Endothelial cell of umbilical vein (primary cell): ENCODE measurements at regions of chr2 and their contacts with region 1.

Region 1: GRCh38 chr2:189221853-189222772 is 42.6 kb upstream of the COL5A2 start:
- DNase-seq: peak; percentile 91
- H3K4me3 ChIP-seq: no peak overlapping the region
- H3K27ac ChIP-seq: peak overlapping the region; percentile 32
- H3K4me1 ChIP-seq: peaks cover 21% of the 10 kb centered on the region
- H3K27me3 ChIP-seq: no peaks in the 10 kb centered on the region
- CTCF ChIP-seq: no peak
- POLR2A ChIP-seq: no peak

Region 2: GRCh38 chr2:189210250-189211075 is 11.7 kb before region 1 on chr2:
- CTCF ChIA-PET with region 1: interaction called, 6 read pairs
- POLR2A ChIA-PET with region 1: no interaction called
- dilution Hi-C with region 1: no loop called
- intact Hi-C with region 1: loop called (anchors 1 kb)
- DNase-seq: peak; percentile 94
- H3K4me3 ChIP-seq: peak overlapping the region in 2 of 3 experiments; percentile 16 to 68
- H3K27ac ChIP-seq: peak overlapping the region; percentile 95
- H3K4me1 ChIP-seq: peaks cover 35% of the 10 kb centered on the region
- H3K27me3 ChIP-seq: no peaks in the 10 kb centered on the region
- CTCF ChIP-seq: no peak
- POLR2A ChIP-seq: no peak

Region 3: GRCh38 chr2:189276277-189276676 is 54.2 kb after region 1 on chr2:
- CTCF ChIA-PET with region 1: no interaction called
- POLR2A ChIA-PET with region 1: no interaction called
- dilution Hi-C with region 1: no loop called
- intact Hi-C with region 1: loop called (anchors 2 kb)
- DNase-seq: peak; percentile 66
- H3K4me3 ChIP-seq: no peak overlapping the region
- H3K27ac ChIP-seq: no peak overlapping the region
- H3K4me1 ChIP-seq: peaks cover 8% of the 10 kb centered on the region
- H3K27me3 ChIP-seq: no peaks in the 10 kb centered on the region
- CTCF ChIP-seq: no peak
- POLR2A ChIP-seq: no peak